Activated CD8-positive, alpha-beta T cell treated with anti-CD3 and anti-CD28 coated beads, Interleukin-2, amount 10 ng/mL, durations not matched to agents 7 days and 5 days (primary cell): ENCODE measurements at regions of chr5 and their contacts with region 1.

Region 1: DNA sequence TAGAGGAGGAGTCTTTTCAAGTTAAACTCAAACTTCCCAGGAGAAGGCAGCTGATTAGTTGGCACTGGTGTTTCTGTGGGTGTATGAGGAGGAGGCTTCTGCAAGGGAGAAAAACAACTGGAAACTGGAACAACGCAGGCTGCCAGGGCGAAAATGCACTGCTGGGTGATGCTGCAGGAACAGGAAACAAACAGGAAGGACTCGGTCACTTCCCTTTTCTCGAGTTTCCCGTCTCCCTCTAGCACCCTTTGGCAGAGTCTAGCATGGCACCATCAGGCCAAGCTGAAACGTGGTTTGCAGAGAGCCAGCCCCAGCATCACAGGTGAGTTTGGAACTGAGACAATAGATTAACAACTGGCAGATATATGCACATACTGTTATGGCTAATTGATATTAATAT is 77.5 kb upstream of the CAST start:
- DNase-seq: no peak
- ATAC-seq: no peak
- H3K4me3 Mint-ChIP-seq: no peak overlapping the region
- H3K27ac Mint-ChIP-seq: no peak overlapping the region
- H3K4me1 Mint-ChIP-seq: peaks cover 6% of the 10 kb centered on the region
- H3K27me3 Mint-ChIP-seq: peaks cover 18% of the 10 kb centered on the region

Region 2: DNA sequence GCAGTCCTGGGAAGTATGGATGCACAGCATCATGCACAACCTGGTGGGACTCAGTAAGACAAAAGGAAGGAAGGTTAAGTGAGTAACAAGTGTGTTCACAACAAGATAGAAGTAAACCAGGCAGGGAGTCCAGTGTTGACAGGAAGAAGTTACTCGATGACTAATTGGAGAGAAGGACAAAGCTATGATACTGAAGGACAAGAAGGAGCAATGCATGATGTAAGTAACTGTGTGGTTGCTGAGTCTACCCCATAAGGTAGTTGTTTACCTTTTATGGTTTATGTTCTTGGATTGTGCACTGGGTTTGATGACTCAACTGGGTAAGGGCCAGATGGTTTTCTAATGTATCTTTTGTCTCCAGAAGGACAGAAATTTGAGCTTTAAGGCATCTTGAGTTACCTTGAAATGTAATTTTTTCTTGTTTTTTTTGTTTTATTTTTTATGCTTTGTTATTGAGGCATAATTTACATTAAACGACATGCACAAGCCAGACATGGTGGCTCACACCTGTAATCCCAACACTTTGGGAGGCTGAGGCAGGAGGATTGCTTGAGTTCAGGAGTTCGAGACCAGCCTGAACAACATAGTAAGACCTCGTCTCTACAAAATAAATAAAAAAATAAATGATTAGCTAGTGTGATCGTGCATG is 11.7 kb before region 1 on chr5:
- CTCF ChIA-PET with region 1: no interaction called
- POLR2A ChIA-PET with region 1: no interaction called
- DNase-seq: no peak
- ATAC-seq: no peak
- H3K4me3 Mint-ChIP-seq: no peak overlapping the region
- H3K27ac Mint-ChIP-seq: no peak overlapping the region
- H3K4me1 Mint-ChIP-seq: no peaks in the 10 kb centered on the region
- H3K27me3 Mint-ChIP-seq: peaks cover 20% of the 10 kb centered on the region

Region 3: GRCh38 chr5:96595300-96596090 is 10.8 kb after region 1 on chr5:
- CTCF ChIA-PET with region 1: interaction called, 19 read pairs
- POLR2A ChIA-PET with region 1: no interaction called
- DNase-seq: peak; percentile 37
- ATAC-seq: no peak
- H3K4me3 Mint-ChIP-seq: no peak overlapping the region
- H3K27ac Mint-ChIP-seq: no peak overlapping the region
- H3K4me1 Mint-ChIP-seq: no peaks in the 10 kb centered on the region
- H3K27me3 Mint-ChIP-seq: peaks cover 21% of the 10 kb centered on the region

Region 4: DNA sequence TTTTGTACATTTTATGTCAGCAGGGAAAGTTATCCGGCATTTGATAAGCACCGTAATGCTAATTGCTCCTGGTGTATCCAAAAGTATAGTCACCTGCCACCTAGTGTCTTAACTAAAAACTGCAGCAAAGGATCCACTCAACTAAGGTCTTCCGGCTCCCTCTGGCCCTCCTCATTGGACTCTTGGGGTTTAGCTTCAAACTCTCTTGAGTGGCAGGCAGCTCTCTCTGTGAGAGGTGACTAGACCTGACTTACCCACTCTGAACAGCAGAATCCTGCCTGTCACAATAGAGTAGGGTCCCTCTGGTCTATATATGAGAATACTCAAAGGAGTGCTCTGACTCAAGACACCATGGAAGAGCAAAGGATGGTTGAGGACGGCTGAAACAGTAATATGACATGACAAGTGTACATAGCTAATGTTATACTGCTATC is 17.1 kb after region 1 on chr5:
- CTCF ChIA-PET with region 1: interaction called, 17 read pairs
- POLR2A ChIA-PET with region 1: no interaction called
- DNase-seq: peak; percentile 74
- ATAC-seq: peak; percentile 79
- H3K4me3 Mint-ChIP-seq: no peak overlapping the region
- H3K27ac Mint-ChIP-seq: no peak overlapping the region
- H3K4me1 Mint-ChIP-seq: no peaks in the 10 kb centered on the region
- H3K27me3 Mint-ChIP-seq: peaks cover 8% of the 10 kb centered on the region

Region 5: DNA sequence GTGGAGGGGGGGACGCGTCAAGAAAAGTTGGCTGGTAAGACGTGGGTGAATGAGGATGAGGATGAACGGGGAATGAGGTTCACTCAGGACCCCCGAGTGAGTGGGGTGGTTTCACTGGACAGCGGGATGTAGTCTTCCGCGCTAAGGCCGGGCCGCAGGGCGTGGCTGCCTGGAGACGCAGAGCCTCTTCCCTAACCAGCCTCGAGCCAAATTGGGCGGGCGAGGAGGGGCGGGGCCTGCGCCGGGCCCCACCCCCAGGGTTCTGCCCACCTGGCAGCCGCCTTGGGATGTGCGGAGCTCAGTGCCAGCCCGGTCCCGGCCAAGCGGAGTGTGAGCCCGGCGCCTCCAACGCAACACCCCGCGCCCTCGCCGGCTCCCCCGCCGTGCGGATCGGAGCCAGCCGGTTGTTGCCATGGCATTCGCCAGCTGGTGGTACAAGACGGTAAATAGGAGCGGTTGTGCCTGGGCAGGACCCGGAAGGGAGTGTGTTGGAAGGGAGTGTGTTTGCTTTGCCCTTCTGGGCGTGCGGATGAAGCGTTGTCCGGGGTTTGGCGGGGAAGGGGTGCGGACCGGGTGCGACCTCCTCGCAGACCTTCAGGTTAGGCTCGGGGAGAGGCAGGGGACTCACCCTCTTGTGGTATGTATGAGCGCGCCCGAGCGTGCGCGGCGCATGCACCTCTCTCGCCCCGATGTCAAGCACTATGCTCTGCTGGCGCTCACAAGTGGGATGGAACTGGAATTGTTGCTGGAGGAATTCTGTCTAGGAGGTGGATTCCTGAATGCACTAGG is 78.2 kb after region 1 on chr5:
- CTCF ChIA-PET with region 1: no interaction called
- POLR2A ChIA-PET with region 1: no interaction called
- DNase-seq: peak; percentile 89
- ATAC-seq: peak; percentile 85
- H3K4me3 Mint-ChIP-seq: peak overlapping the region; percentile 92
- H3K27ac Mint-ChIP-seq: peak overlapping the region; percentile 92
- H3K4me1 Mint-ChIP-seq: peaks cover 55% of the 10 kb centered on the region
- H3K27me3 Mint-ChIP-seq: peaks cover 11% of the 10 kb centered on the region